ENCODE measurements at regions of chr12 and their contacts with region 1.

Region 1: GRCh38 chr12:124680863-124681778 is 113.7 kb upstream of the NCOR2 start:
- DNase-seq: no peak

Region 2: DNA sequence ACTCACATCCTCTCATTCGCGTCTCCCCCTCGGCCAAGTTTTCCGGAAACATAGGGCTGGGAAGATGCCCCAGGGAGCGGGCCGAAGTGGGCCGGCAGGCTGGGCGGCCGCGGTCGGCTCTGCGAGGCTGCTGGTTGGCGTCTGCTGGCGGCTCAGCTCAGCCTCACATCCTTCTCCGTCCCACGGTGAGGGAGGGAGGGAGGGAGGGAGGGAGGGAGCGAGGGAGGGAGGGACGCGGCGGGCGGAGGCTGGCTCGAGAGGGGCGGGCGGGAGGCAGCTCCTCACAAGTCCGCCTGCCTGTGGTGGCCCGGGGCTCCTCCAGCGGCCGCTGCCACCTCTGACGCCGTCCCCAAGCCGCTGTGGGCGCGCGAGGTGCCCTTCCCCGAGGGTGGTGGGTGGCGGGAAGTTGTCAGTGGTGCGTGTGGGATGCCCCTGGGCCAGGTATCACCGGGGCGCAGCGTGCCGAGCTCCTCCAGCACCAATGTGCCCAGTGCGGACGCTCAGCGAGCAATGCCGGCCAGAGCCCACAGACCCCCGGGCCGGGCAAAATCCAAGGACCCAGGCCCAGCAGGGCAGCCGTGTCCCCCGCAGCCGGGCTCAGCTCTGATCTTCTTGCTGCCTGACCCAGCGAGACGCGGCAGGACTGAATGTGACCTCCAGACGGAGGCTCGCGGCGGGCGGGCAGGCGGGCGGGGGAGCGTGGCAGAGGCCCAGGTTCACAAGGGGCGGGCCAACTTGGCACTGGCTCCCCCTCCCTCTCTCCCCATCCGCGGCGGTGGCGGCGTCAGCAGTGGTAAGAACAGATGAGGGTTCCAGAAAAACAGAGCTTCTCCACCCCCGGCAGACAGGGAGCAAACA is 292.2 kb before region 1 on chr12:
- intact Hi-C with region 1: loop called in 1 of 2 experiments (anchors 10 kb)
- DNase-seq: peak; percentile 97

Region 3: DNA sequence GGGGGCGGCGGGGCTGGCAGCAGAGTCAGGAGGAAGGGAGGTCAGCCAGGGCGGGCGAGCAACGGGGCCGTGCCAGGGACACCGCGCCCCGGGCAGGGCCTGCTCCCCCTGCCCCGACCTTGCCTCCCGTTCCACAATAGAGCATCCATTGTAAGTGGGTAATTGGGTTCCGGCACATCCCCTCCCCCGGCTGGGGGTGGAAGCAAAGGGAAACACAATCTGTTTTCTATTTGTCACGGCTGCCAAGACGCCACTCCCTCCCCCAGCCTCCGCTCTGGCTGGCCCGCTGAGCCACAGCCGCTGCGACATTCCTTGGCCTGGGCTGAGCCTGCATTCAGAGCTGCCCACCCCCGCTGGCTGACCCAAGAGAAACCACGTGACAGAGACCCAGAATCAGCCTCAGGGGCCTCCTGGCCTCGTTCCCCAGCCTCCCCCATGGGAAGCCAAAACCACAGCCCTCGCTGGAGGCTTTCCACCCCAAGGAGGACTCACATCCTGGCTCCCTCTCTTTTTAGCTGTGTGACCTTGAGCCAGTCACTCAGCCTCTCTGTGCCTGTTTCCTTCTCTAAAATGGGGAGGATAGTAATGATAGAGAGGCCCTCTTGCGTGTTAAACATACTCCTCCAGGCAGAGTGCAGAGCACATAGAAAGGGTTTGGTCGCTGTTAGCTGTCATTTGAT is 64.9 kb after region 1 on chr12:
- intact Hi-C with region 1: loop called in 1 of 2 experiments (anchors 5 kb)
- DNase-seq: peak; percentile 98